ENCODE measurements at regions of chr17 and their contacts with region 1.

Region 1: DNA sequence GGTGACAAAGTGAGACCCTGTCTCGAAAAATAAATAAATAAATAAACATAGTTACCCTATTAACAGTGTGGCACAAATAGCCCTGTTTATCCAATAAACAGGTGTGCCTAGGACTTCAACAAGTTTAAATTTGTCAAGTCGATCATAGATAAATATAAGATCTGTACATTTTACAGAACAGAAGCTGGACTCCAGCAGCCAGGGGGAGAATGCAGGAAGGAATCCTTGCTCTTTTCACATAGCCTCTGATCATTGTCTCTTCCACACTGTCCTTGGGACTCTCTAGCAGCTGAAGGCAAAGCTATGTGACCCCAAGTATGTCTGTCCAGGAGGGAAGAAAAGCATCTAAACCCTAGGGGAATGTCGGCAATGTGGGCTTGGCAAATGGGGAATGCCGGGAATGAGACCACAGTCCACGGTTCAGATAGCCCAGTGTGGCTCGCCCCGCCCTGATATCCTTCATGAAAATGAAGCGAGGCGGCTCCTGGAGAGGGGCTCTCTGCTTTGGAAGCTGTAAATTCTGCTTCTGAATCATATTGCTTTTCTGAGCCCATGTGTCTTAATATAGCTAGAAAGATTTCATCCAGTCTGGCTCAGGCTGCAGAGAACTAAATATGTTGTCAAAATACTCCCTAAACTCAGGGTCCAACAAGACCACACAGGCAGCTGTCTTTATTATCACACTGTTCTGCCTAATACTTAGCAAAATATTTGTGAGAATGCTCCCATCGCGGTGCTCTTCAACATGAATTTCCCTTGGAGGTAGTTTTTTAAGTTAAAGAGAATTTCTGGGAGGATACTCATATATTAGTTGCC is 24.9 kb upstream of the GRB2 start:
- DNase-seq: no peak
- H3K4me3 ChIP-seq: no peak overlapping the region
- H3K27ac ChIP-seq: peak overlapping the region; percentile 72 to 82 (median 80)
- H3K4me1 ChIP-seq: peaks cover 0 to 39% (median 26%) of the 10 kb centered on the region in 4 donors
- H3K27me3 ChIP-seq: no peaks in the 10 kb centered on the region
- CTCF ChIP-seq: no peak
- EP300 ChIP-seq: no peak
- POLR2A ChIP-seq: no peak

Region 2: DNA sequence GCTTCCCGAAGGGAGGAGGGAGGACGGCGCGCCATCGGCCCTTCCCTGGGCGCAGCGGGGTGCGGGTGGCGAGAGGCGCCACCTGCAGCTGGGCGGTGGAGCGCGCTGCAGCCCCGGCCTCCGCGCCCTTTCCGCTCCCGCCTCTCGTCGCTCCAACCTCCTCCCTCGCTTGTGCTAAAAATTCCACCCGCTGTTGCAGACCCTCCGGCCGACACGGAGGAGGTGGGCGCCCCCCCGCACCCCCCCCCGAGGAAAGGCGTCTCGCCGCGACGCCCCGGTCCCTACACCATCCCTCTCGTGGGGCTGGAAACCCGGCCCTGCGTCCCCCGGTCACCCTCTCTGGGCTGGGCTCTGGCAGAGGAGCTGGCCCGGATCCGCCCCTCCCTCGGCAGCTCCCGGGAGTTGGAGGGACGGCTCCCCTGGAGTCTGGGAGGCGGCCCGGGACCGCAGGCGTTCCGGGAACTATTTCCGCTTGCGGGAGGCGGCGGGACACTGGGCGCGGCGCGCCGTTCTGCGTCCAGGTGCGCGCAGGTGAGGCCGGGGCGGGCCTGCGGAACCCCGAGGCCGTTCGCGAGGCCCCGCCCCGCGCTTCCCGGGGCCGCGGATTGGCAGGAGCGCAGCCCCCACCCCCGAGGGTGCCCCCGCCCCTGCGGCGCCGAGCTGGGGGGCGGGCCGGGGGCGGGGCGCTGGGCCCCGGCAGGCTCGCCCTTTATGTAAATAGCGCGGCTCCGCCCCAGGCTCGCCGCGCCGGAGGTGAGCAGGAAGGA is 94.8 kb after region 1 on chr17 and contains the start of gene LLGL2:
- intact Hi-C with region 1: loop called (anchors 1 kb)
- DNase-seq: peak; percentile 81
- H3K4me3 ChIP-seq: peak within 1 kb of the TSS; percentile 37 to 71 (median 60)
- H3K27ac ChIP-seq: peak within 1 kb of the TSS; percentile 52 to 70 (median 64)
- H3K4me1 ChIP-seq: peaks cover 0 to 22% (median 18%) of the 10 kb centered on the region in 4 donors
- H3K27me3 ChIP-seq: peaks cover 0 to 10% (median 0%) of the 10 kb centered on the region in 3 donors
- CTCF ChIP-seq: peak in 3 of 4 experiments; percentile 9 to 39 (median 23)
- EP300 ChIP-seq: no peak
- POLR2A ChIP-seq: peak in 1 of 2 donors; percentile 57
- total RNA-seq, gene LLGL2: 1.4 to 5.0 (median 3.4) TPM

Measured in sigmoid colon (tissue), 7 donors.